GM12878 (cell line): ENCODE measurements at regions of chr10 and their contacts with region 1.

Region 1: GRCh38 chr10:53013201-53013810 is 240.7 kb upstream of the MBL2 start:
- DNase-seq: no peak
- ATAC-seq: peak; percentile 84
- H3K4me3 ChIP-seq: no peak overlapping the region
- H3K27ac ChIP-seq: no peak overlapping the region
- H3K4me1 ChIP-seq: peaks cover 14% of the 10 kb centered on the region; the same call in 1 of the 2 replicates
- H3K27me3 ChIP-seq: no peaks in the 10 kb centered on the region
- CTCF ChIP-seq: no peak
- EP300 ChIP-seq: peak; percentile 39 to 56; a peak in 1 of 4 replicates
- POLR2A ChIP-seq: no peak
- RAD21 ChIP-seq: no peak

Region 2: GRCh38 chr10:52992567-52992966 is 20.7 kb before region 1 on chr10:
- CTCF ChIA-PET with region 1: no interaction called
- POLR2A ChIA-PET with region 1: no interaction called
- RAD21 ChIA-PET with region 1: no interaction called
- SMC1A ChIA-PET with region 1: no interaction called
- in situ Hi-C with region 1: no loop called
- intact Hi-C with region 1: no loop called
- DNase-seq: no peak
- ATAC-seq: no peak
- H3K4me3 ChIP-seq: no peak overlapping the region
- H3K27ac ChIP-seq: no peak overlapping the region
- H3K4me1 ChIP-seq: no peaks in the 10 kb centered on the region
- H3K27me3 ChIP-seq: no peaks in the 10 kb centered on the region
- CTCF ChIP-seq: no peak
- EP300 ChIP-seq: no peak
- POLR2A ChIP-seq: no peak
- RAD21 ChIP-seq: no peak

Region 3: DNA sequence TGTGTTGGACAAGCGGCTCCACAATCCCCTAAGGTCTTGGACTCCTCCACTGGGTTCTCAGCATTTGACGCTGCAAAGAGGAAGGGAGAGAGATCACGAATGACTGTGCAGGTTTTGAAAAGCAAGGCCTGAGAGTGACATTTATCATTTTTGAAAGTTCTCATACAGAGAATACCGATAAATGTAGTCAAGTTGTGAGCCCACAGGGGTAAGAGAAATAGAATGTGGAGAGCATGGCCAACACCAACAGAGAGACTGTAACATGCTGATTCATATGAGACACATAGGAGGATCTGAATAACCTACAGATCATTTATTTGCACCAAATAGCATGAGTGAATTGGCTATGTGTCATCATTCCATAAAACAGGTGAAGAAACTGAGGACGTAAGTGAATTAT is 10.2 kb before region 1 on chr10:
- CTCF ChIA-PET with region 1: no interaction called
- POLR2A ChIA-PET with region 1: no interaction called
- RAD21 ChIA-PET with region 1: interaction called, 3 read pairs
- SMC1A ChIA-PET with region 1: interaction called, 13 read pairs
- in situ Hi-C with region 1: no loop called
- intact Hi-C with region 1: no loop called
- DNase-seq: no peak
- ATAC-seq: peak; percentile 71
- H3K4me3 ChIP-seq: no peak overlapping the region
- H3K27ac ChIP-seq: no peak overlapping the region
- H3K4me1 ChIP-seq: no peaks in the 10 kb centered on the region
- H3K27me3 ChIP-seq: no peaks in the 10 kb centered on the region
- CTCF ChIP-seq: no peak
- EP300 ChIP-seq: no peak
- POLR2A ChIP-seq: no peak
- RAD21 ChIP-seq: no peak

Region 4: GRCh38 chr10:53025172-53025711 is 11.9 kb after region 1 on chr10:
- CTCF ChIA-PET with region 1: interaction called, 7 read pairs
- POLR2A ChIA-PET with region 1: interaction called, 4 read pairs
- RAD21 ChIA-PET with region 1: no interaction called
- SMC1A ChIA-PET with region 1: interaction called, 11 read pairs
- in situ Hi-C with region 1: no loop called
- intact Hi-C with region 1: no loop called
- DNase-seq: no peak
- ATAC-seq: peak; percentile 83
- H3K4me3 ChIP-seq: peak overlapping the region; percentile 35; the same call in 1 of the 2 replicates
- H3K27ac ChIP-seq: peak overlapping the region; percentile 24; the same call in 1 of the 2 replicates
- H3K4me1 ChIP-seq: no peaks in the 10 kb centered on the region
- H3K27me3 ChIP-seq: no peaks in the 10 kb centered on the region
- CTCF ChIP-seq: no peak
- EP300 ChIP-seq: no peak
- POLR2A ChIP-seq: no peak
- RAD21 ChIP-seq: no peak

Region 5: DNA sequence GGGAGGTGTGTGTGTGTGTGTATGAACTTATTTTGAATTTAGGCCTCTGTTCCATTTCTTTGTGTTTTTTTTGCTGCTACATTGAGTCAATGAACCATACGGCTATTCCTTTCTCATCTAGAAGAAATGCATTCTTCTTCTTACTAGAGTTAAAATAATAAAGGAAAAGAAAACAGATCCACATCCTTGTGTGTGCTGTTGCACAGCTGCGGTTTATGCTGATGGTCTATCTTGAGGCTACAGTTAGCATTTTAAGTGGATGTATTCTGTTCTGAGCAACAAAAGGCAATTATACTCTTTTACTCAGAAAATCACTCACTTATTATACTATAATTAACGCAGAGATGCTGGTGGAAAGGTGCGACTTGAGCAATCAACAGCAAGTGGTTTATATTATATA is 374.3 kb after region 1 on chr10:
- CTCF ChIA-PET with region 1: no interaction called
- POLR2A ChIA-PET with region 1: no interaction called
- RAD21 ChIA-PET with region 1: no interaction called
- SMC1A ChIA-PET with region 1: no interaction called
- in situ Hi-C with region 1: no loop called
- intact Hi-C with region 1: no loop called
- DNase-seq: no peak
- ATAC-seq: no peak
- H3K4me3 ChIP-seq: no peak overlapping the region
- H3K27ac ChIP-seq: no peak overlapping the region
- H3K4me1 ChIP-seq: no peaks in the 10 kb centered on the region
- H3K27me3 ChIP-seq: no peaks in the 10 kb centered on the region
- CTCF ChIP-seq: no peak
- EP300 ChIP-seq: no peak
- POLR2A ChIP-seq: no peak
- RAD21 ChIP-seq: no peak